ENCODE measurements at regions of chr16 and their contacts with region 1.

Region 1: GRCh38 chr16:25224731-25225319 is 8.1 kb downstream of the AQP8 start:
- DNase-seq: no peak
- ATAC-seq: no peak
- H3K4me3 ChIP-seq: no peak overlapping the region
- H3K27ac ChIP-seq: no peak overlapping the region
- H3K4me1 ChIP-seq: peaks cover 3 to 4% of the 10 kb centered on the region in 2 experiments; a peak in 4 of 5 replicates
- H3K27me3 ChIP-seq: no peaks in the 10 kb centered on the region; a peak in 1 of 5 replicates
- CTCF ChIP-seq: no peak
- EP300 ChIP-seq: no peak
- POLR2A ChIP-seq: no peak
- RAD21 ChIP-seq: no peak

Region 2: DNA sequence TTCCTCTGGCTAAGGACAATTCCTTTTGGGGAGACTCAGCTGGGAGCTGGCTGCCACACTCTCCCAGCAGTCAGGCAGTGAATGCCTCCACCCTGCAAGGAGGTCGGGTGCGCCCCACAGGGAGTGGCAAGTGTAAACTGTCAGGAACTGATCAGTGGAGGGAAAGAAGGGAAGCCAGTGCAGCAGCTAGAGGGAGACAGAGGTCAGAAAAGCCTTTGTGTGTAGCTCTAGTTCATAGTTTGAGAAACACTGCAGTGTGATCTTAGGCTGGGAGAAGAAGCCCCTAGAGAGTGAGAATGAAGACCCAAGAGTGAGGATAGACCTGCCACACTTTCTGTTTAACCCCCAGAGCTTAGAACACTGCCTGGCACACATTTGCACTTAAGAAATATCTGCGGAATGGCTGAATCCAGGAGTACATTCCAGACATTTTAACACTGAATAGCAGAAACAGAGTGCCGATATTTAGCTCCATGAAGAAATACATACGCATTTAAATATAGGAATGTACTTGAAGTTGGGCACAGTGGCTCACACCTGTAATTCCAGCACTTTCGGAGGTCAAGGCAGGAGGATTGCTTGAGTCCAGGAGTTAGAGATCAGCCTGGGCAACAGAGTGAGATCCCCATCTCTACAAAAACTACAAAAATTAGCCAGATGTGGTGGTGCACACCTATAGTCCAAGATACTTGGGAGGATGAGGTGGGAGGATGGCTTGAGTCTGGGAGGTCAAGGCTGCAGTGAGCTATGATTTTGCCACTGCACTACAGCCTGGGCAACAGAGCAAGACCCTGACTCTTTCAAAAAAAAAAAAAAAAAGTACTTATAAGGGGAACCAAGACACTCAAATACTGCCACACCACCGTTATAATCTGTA is 390.1 kb before region 1 on chr16:
- CTCF ChIA-PET with region 1: no interaction called
- POLR2A ChIA-PET with region 1: interaction called, 7 read pairs
- in situ Hi-C with region 1: loop called (anchors 10 kb)
- intact Hi-C with region 1: loop called (anchors 10 kb)
- DNase-seq: peak; percentile 50 to 80 (median 62)
- ATAC-seq: peak; percentile 89
- H3K4me3 ChIP-seq: no peak overlapping the region
- H3K27ac ChIP-seq: no peak overlapping the region
- H3K4me1 ChIP-seq: peaks cover 15 to 19% of the 10 kb centered on the region in 2 experiments
- H3K27me3 ChIP-seq: no peaks in the 10 kb centered on the region
- CTCF ChIP-seq: peak; percentile 76 to 92 (median 83)
- EP300 ChIP-seq: no peak; the same call in 1 of the 2 replicates
- POLR2A ChIP-seq: no peak
- RAD21 ChIP-seq: peak; percentile 69 to 90

Region 3: GRCh38 chr16:25126820-25127232 is 98.0 kb before region 1 on chr16:
- CTCF ChIA-PET with region 1: interaction called, 22 read pairs
- POLR2A ChIA-PET with region 1: interaction called, 5 read pairs
- in situ Hi-C with region 1: no loop called
- intact Hi-C with region 1: loop called (anchors 2 kb)
- DNase-seq: peak in 3 of 4 experiments; percentile 21 to 39 (median 38)
- ATAC-seq: peak; percentile 76
- H3K4me3 ChIP-seq: no peak overlapping the region
- H3K27ac ChIP-seq: no peak overlapping the region
- H3K4me1 ChIP-seq: no peaks in the 10 kb centered on the region
- H3K27me3 ChIP-seq: no peaks in the 10 kb centered on the region
- CTCF ChIP-seq: peak; percentile 42 to 77 (median 74); a peak in 5 of 6 replicates
- EP300 ChIP-seq: no peak
- POLR2A ChIP-seq: no peak
- RAD21 ChIP-seq: peak; percentile 73 to 87

Region 4: GRCh38 chr16:25257504-25257955 is 32.7 kb after region 1 on chr16 and contains the start of gene ZKSCAN2:
- CTCF ChIA-PET with region 1: no interaction called
- POLR2A ChIA-PET with region 1: no interaction called
- in situ Hi-C with region 1: no loop called
- intact Hi-C with region 1: no loop called
- DNase-seq: peak; percentile 93 to 94 (median 94)
- ATAC-seq: peak; percentile 94
- H3K4me3 ChIP-seq: peak within 1 kb of the TSS; percentile 59
- H3K27ac ChIP-seq: peak within 1 kb of the TSS; percentile 98
- H3K4me1 ChIP-seq: peaks cover 7 to 19% of the 10 kb centered on the region in 2 experiments; a peak in 4 of 5 replicates
- H3K27me3 ChIP-seq: no peaks in the 10 kb centered on the region
- CTCF ChIP-seq: no peak
- EP300 ChIP-seq: 0 out of 2 replicates have a peak, but pooled peaks have one; percentile 10
- POLR2A ChIP-seq: peak; percentile 98
- RAD21 ChIP-seq: no peak
- polyA plus RNA-seq, gene ZKSCAN2: 1.3 to 1.9 TPM

Region 5: GRCh38 chr16:25959221-25959620 is 734.4 kb after region 1 on chr16:
- CTCF ChIA-PET with region 1: no interaction called
- POLR2A ChIA-PET with region 1: no interaction called
- in situ Hi-C with region 1: no loop called
- intact Hi-C with region 1: no loop called
- DNase-seq: no peak
- ATAC-seq: no peak
- H3K4me3 ChIP-seq: no peak overlapping the region
- H3K27ac ChIP-seq: no peak overlapping the region
- H3K4me1 ChIP-seq: no peaks in the 10 kb centered on the region
- H3K27me3 ChIP-seq: no peaks in the 10 kb centered on the region
- CTCF ChIP-seq: no peak
- EP300 ChIP-seq: no peak
- POLR2A ChIP-seq: no peak
- RAD21 ChIP-seq: no peak